ENCODE measurements at regions of chr20 and their contacts with region 1.

Region 1: GRCh38 chr20:63381807-63382322 is 20.7 kb upstream of the CHRNA4 start:
- DNase-seq: no peak
- H3K4me3 ChIP-seq: no peak overlapping the region
- H3K27ac ChIP-seq: no peak overlapping the region
- H3K4me1 ChIP-seq: no peaks in the 10 kb centered on the region
- H3K27me3 ChIP-seq: peaks cover 47% of the 10 kb centered on the region
- CTCF ChIP-seq: peak; percentile 68 to 89 (median 78)
- EP300 ChIP-seq: no peak
- POLR2A ChIP-seq: no peak

Region 2: GRCh38 chr20:63309261-63310071 is 72.4 kb before region 1 on chr20:
- in situ Hi-C with region 1: no loop called
- intact Hi-C with region 1: loop called (anchors 5 kb)
- DNase-seq: peak; percentile 20
- H3K4me3 ChIP-seq: no peak overlapping the region
- H3K27ac ChIP-seq: no peak overlapping the region
- H3K4me1 ChIP-seq: no peaks in the 10 kb centered on the region
- H3K27me3 ChIP-seq: peaks cover 50% of the 10 kb centered on the region
- CTCF ChIP-seq: peak; percentile 67 to 85 (median 72)
- EP300 ChIP-seq: no peak
- POLR2A ChIP-seq: no peak